CD8-positive, alpha-beta T cell (primary cell): ENCODE measurements at regions of chr12 and their contacts with region 1.

Region 1: DNA sequence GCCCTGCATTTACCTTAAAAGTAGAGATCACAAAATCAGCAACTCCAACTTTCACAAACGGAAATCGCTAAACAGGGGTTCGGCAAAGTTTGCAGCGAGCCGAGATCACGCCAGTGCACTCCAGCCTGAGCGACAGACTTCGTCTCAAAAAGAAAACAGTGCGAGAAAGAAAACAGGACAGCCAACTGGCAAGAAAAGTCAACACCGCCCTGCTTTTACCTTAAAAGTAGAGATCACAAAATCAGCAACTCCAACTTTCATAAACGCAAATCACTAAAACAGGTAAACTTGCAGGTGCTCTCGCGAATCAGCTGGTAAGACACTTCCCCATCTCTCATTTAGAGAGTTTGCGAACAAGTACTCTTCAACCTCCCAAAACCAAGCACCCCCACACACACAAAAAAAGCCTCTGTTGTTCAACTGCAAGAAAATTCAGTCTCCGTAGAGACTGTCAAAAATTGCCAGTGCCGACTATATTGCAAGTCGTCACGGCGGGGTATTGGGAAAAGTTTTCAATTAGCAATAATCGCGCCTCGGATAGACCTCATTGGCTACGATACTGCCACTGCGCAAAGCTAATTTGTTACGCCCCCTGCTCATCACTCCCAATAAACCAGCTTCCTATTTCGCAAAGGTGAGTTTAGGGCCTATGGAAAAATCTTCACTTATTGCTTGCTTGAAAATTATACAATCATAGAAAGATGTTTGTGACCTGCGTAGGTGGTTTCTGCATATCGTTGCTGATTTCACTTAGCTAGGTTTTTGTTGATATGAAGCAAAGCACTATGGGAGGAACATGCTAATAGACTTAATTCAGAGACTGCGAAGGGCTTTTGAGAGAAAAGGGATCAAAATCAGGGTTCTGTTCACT is at the start of gene RNU4-1:
- DNase-seq: peak; percentile 53 to 91 (median 75)
- ATAC-seq: peak; percentile 56
- H3K4me3 ChIP-seq: peak within 1 kb of the TSS; percentile 69 to 72
- H3K4me3 Mint-ChIP-seq: no peak within 1 kb of the TSS
- H3K27ac ChIP-seq: peak within 1 kb of the TSS; percentile 99
- H3K27ac Mint-ChIP-seq: no peak within 1 kb of the TSS
- H3K4me1 ChIP-seq: peaks cover 14% of the 10 kb centered on the region
- H3K4me1 Mint-ChIP-seq: peaks cover 8% of the 10 kb centered on the region
- H3K27me3 ChIP-seq: no peaks in the 10 kb centered on the region
- H3K27me3 Mint-ChIP-seq: no peaks in the 10 kb centered on the region
- CTCF ChIP-seq: no peak
- total RNA-seq, gene RNU4-1: 1,572 to 1,612 TPM

Region 2: GRCh38 chr12:120055231-120056021 is 237.5 kb before region 1 on chr12:
- CTCF ChIA-PET with region 1: no interaction called
- POLR2A ChIA-PET with region 1: no interaction called
- intact Hi-C with region 1: no loop called
- DNase-seq: no peak
- ATAC-seq: no peak
- H3K4me3 ChIP-seq: no peak overlapping the region
- H3K4me3 Mint-ChIP-seq: no peak overlapping the region
- H3K27ac ChIP-seq: no peak overlapping the region
- H3K27ac Mint-ChIP-seq: no peak overlapping the region
- H3K4me1 ChIP-seq: no peaks in the 10 kb centered on the region
- H3K4me1 Mint-ChIP-seq: peaks cover 17% of the 10 kb centered on the region
- H3K27me3 ChIP-seq: no peaks in the 10 kb centered on the region
- H3K27me3 Mint-ChIP-seq: no peaks in the 10 kb centered on the region
- CTCF ChIP-seq: no peak

Region 3: DNA sequence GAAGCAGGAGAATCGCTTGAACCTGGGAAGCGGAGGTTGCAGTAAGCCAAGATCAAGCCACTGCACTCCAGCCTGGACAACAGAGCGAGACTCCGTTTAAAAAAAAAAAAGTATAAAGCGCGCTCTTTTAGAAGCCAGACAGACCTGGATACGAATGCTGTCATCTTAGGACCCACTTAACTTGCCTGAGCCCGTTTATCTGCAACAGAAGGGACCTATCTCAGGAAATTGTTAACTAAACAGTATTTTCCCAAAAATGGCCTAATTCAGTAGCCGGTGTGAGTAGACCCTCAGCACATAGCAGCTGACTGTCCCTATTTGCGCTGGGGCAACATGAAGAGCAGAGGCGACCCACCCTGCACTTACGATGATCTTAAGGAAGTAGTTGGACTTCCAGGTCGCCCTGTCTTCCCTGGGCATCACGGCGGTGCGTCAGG is 92.5 kb before region 1 on chr12:
- CTCF ChIA-PET with region 1: interaction called, 15 read pairs
- POLR2A ChIA-PET with region 1: interaction called, 103 read pairs
- intact Hi-C with region 1: loop called in 1 of 2 experiments (anchors 2 kb)
- DNase-seq: no peak
- ATAC-seq: no peak
- H3K4me3 ChIP-seq: peak overlapping the region; percentile 89 to 91
- H3K4me3 Mint-ChIP-seq: peak overlapping the region; percentile 93
- H3K27ac ChIP-seq: peak overlapping the region; percentile 70 to 83
- H3K27ac Mint-ChIP-seq: peak overlapping the region; percentile 96
- H3K4me1 ChIP-seq: peaks cover 36% of the 10 kb centered on the region
- H3K4me1 Mint-ChIP-seq: peaks cover 32% of the 10 kb centered on the region
- H3K27me3 ChIP-seq: no peaks in the 10 kb centered on the region
- H3K27me3 Mint-ChIP-seq: no peaks in the 10 kb centered on the region
- CTCF ChIP-seq: no peak

Region 4: DNA sequence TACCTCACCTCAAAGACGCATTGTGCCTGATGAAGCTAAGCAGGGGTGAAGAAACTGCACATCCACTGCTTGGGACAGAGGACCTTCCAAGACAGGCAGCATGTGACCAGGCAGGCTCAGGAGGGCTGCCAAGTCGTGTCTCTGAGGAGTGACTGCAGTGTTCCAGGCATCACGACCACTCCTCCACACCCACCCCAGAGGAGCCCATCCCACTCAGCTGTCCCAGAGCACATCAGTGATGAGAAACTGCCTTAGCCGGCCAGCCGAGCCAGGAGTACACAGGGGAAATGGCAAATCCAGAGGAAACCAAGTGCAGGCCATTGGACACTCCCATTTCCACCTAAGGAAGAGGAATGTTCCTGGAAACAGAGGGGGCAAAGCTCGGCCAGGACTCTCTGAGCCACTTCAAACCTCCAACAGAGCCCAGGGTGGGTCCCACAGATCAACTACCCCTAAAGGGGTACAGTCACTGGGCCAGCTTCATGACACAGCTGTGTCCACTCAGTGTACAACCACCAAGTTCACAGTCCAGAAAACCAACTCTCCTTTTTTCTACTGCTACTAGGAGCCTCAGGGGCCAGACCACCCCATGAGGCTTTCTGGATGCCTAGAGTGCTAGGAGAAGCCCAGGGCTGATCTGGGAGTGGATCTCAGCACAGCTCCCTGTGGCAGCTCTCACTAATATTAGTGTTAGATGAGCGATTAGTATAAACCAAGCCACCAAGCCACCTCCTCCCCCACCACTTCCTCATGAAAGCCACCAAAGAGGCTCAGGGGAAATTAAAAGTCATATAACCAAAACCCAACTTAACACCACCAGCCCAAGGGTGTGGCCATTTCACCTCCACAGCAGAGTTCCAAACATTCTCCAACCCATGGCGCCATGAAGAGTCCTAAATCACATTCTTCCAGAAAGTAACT is 42.8 kb before region 1 on chr12:
- CTCF ChIA-PET with region 1: no interaction called
- POLR2A ChIA-PET with region 1: interaction called, 81 read pairs
- intact Hi-C with region 1: loop called (anchors 1 to 2 kb)
- DNase-seq: peak in 6 of 9 experiments; percentile 25 to 80 (median 54)
- ATAC-seq: no peak
- H3K4me3 ChIP-seq: peak overlapping the region; percentile 33 to 37
- H3K4me3 Mint-ChIP-seq: peak overlapping the region; percentile 71
- H3K27ac ChIP-seq: peak overlapping the region; percentile 28 to 77
- H3K27ac Mint-ChIP-seq: peak overlapping the region; percentile 85
- H3K4me1 ChIP-seq: peaks cover 83% of the 10 kb centered on the region
- H3K4me1 Mint-ChIP-seq: peaks cover 76% of the 10 kb centered on the region
- H3K27me3 ChIP-seq: no peaks in the 10 kb centered on the region
- H3K27me3 Mint-ChIP-seq: no peaks in the 10 kb centered on the region
- CTCF ChIP-seq: no peak

Region 5: DNA sequence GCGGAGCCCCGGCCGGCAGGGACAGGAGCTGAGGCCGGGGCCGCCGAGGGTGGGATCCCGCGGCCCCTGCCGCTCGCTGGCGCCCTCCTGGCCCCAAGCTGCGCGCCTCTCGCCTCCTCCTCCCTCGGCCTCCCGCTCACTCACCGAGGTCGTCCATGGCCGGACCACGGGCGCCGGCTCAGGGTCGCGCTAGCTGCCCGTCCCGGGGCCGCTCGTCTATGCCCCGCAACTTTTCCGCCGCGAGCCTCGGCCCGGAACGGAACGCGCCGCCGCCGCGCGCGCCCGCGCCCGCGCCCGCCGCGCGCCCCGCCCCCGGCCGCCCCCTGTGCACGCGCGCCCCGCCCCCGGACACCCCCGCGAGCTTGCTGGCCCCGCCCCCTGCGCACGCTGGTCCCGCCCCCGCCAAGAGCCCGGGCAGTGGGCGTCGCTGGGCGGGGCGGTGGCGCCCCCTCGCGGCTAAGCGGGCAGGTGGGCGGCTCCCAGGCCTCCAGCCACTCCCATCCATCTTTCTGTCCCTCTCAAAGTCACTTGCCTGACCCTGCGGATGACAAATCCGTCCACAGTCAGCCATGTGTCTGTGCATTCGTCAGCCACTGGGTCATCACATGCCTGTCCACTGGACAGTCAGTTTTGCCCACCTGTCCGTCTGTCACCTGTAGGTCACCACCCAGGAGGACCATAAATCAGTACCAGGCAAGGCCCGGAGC is 27.3 kb before region 1 on chr12 and contains the start of gene PXN:
- CTCF ChIA-PET with region 1: interaction called, 34 read pairs
- POLR2A ChIA-PET with region 1: interaction called, 28 read pairs
- intact Hi-C with region 1: loop called (anchors 1 to 2 kb)
- DNase-seq: peak; percentile 80 to 97 (median 93)
- ATAC-seq: peak; percentile 90
- H3K4me3 ChIP-seq: peak within 1 kb of the TSS; percentile 77 to 94
- H3K4me3 Mint-ChIP-seq: peak within 1 kb of the TSS; percentile 97
- H3K27ac ChIP-seq: peak within 1 kb of the TSS; percentile 69 to 71
- H3K27ac Mint-ChIP-seq: peak within 1 kb of the TSS; percentile 95
- H3K4me1 ChIP-seq: peaks cover 40% of the 10 kb centered on the region
- H3K4me1 Mint-ChIP-seq: peaks cover 45% of the 10 kb centered on the region
- H3K27me3 ChIP-seq: no peaks in the 10 kb centered on the region
- H3K27me3 Mint-ChIP-seq: no peaks in the 10 kb centered on the region
- CTCF ChIP-seq: peak; percentile 73
- total RNA-seq, gene PXN: 170 to 171 TPM

Region 6: GRCh38 chr12:120469450-120470149 is 176.7 kb after region 1 on chr12 and contains the start of gene SRSF9:
- CTCF ChIA-PET with region 1: interaction called, 4 read pairs
- POLR2A ChIA-PET with region 1: interaction called, 11 read pairs
- intact Hi-C with region 1: no loop called
- DNase-seq: peak; percentile 90 to 99 (median 97)
- ATAC-seq: peak; percentile 84
- H3K4me3 ChIP-seq: peak within 1 kb of the TSS; percentile 77 to 89
- H3K4me3 Mint-ChIP-seq: peak within 1 kb of the TSS; percentile 86
- H3K27ac ChIP-seq: peak within 1 kb of the TSS; percentile 70 to 82
- H3K27ac Mint-ChIP-seq: peak within 1 kb of the TSS; percentile 91
- H3K4me1 ChIP-seq: peaks cover 26% of the 10 kb centered on the region
- H3K4me1 Mint-ChIP-seq: peaks cover 40% of the 10 kb centered on the region
- H3K27me3 ChIP-seq: no peaks in the 10 kb centered on the region
- H3K27me3 Mint-ChIP-seq: no peaks in the 10 kb centered on the region
- CTCF ChIP-seq: peak; percentile 96
- total RNA-seq, gene SRSF9: 137 to 139 TPM